CD8-positive, alpha-beta memory T cell (primary cell): ENCODE measurements at regions of chr6 and their contacts with region 1.

Region 1: DNA sequence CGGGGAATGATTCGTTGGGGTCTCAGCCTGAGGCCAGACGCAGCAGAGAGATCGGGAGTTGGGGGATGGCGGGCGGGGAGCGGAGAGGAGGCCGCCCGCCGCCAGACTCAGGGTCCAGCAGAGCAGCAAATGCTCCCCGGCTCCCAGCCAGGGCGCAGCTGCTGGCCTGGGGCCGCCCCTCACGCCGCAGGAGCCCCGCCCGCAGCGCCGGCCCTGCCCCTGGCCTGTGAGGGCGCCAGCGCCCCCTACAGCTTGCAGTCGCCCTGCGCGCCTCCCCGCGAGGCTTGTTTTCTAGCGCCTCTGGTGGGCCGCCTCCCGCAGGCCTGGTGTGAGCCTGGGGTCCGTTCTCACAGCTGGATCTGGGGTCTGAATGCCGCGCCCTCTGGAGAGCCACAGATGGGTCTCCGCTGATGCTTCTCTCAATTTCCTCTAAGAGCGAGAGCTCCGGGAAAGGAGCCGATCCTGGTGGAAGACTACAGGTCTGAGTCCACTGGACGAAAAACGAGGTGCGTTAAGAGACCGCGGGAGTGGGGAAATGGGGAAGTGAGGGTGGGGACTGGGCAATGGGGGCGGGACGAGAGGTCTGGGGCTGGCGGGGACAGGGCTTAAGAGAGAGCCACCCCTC is 29.9 kb downstream of the TRIM38 start:
- DNase-seq: peak; percentile 87 to 93 (median 90)
- H3K4me3 ChIP-seq: peak overlapping the region; percentile 98
- H3K4me3 Mint-ChIP-seq: peak overlapping the region; percentile 84 to 95 (median 94)
- H3K27ac ChIP-seq: peak overlapping the region; percentile 81
- H3K27ac Mint-ChIP-seq: peak overlapping the region; percentile 83 to 98 (median 94)
- H3K4me1 ChIP-seq: no peaks in the 10 kb centered on the region
- H3K4me1 Mint-ChIP-seq: peaks cover 18 to 39% (median 22%) of the 10 kb centered on the region in 3 donors
- H3K27me3 ChIP-seq: no peaks in the 10 kb centered on the region
- H3K27me3 Mint-ChIP-seq: peaks cover 0 to 4% of the 10 kb centered on the region in 2 donors

Region 2: GRCh38 chr6:25042036-25042521 is 950.4 kb before region 1 on chr6:
- CTCF ChIA-PET with region 1: no interaction called
- POLR2A ChIA-PET with region 1: no interaction called
- DNase-seq: peak; percentile 38 to 68 (median 52)
- H3K4me3 ChIP-seq: peak overlapping the region; percentile 85
- H3K4me3 Mint-ChIP-seq: peak overlapping the region; percentile 94 to 99 (median 96)
- H3K27ac ChIP-seq: peak overlapping the region; percentile 67
- H3K27ac Mint-ChIP-seq: peak overlapping the region; percentile 93 to 100 (median 98)
- H3K4me1 ChIP-seq: peaks cover 55% of the 10 kb centered on the region
- H3K4me1 Mint-ChIP-seq: peaks cover 57 to 66% (median 64%) of the 10 kb centered on the region in 3 donors
- H3K27me3 ChIP-seq: no peaks in the 10 kb centered on the region
- H3K27me3 Mint-ChIP-seq: no peaks in the 10 kb centered on the region

Region 3: GRCh38 chr6:25973923-25974555 is 18.5 kb before region 1 on chr6:
- CTCF ChIA-PET with region 1: interaction called, 14 read pairs
- POLR2A ChIA-PET with region 1: interaction called, 5 read pairs
- DNase-seq: no peak
- H3K4me3 ChIP-seq: no peak overlapping the region
- H3K4me3 Mint-ChIP-seq: no peak overlapping the region
- H3K27ac ChIP-seq: no peak overlapping the region
- H3K27ac Mint-ChIP-seq: peak overlapping the region in 3 of 8 donors; percentile 50 to 72 (median 60)
- H3K4me1 ChIP-seq: peaks cover 11% of the 10 kb centered on the region
- H3K4me1 Mint-ChIP-seq: peaks cover 30 to 67% (median 54%) of the 10 kb centered on the region in 3 donors
- H3K27me3 ChIP-seq: no peaks in the 10 kb centered on the region
- H3K27me3 Mint-ChIP-seq: no peaks in the 10 kb centered on the region

Region 4: DNA sequence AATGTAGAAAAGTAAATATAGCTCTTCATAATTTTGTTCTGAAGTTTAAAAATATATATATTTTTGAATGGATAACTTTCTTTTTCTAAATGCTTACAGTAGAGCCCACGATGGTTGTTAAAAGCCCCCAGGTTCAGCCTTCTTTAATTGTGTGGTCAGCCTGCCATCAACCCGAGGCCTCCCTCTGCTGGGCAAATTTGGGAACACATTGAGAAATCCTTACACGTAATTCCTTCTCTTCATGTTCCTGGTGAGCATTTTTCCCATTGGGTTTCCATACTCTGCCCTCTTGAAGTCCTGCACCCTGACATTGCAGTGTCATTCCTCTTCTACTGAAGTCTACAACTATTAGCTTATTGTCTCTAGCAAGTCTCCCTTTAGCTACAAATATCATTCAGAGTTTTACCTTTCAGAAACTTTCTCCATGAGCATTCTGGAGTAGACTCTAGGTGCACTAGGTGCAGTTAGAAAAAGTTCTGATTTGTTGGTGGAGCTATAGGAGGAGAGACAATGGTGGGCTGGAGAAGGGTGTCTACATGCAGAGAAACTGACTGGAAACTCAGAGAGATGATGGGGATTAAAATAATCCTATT is 10.7 kb after region 1 on chr6:
- CTCF ChIA-PET with region 1: interaction called, 100 read pairs
- POLR2A ChIA-PET with region 1: interaction called, 4 read pairs
- DNase-seq: peak; percentile 17 to 65 (median 28)
- H3K4me3 ChIP-seq: no peak overlapping the region
- H3K4me3 Mint-ChIP-seq: no peak overlapping the region
- H3K27ac ChIP-seq: no peak overlapping the region
- H3K27ac Mint-ChIP-seq: no peak overlapping the region
- H3K4me1 ChIP-seq: no peaks in the 10 kb centered on the region
- H3K4me1 Mint-ChIP-seq: peaks cover 0 to 8% (median 0%) of the 10 kb centered on the region in 3 donors
- H3K27me3 ChIP-seq: no peaks in the 10 kb centered on the region
- H3K27me3 Mint-ChIP-seq: no peaks in the 10 kb centered on the region

Region 5: GRCh38 chr6:26020329-26021000 is 27.9 kb after region 1 on chr6:
- CTCF ChIA-PET with region 1: interaction called, 88 read pairs
- POLR2A ChIA-PET with region 1: interaction called, 53 read pairs
- DNase-seq: peak; percentile 68 to 92 (median 88)
- H3K4me3 ChIP-seq: peak overlapping the region; percentile 93
- H3K4me3 Mint-ChIP-seq: peak overlapping the region; percentile 81 to 99 (median 95)
- H3K27ac ChIP-seq: peak overlapping the region; percentile 98
- H3K27ac Mint-ChIP-seq: peak overlapping the region; percentile 93 to 100 (median 100)
- H3K4me1 ChIP-seq: peaks cover 14% of the 10 kb centered on the region
- H3K4me1 Mint-ChIP-seq: peaks cover 30 to 57% (median 44%) of the 10 kb centered on the region in 3 donors
- H3K27me3 ChIP-seq: no peaks in the 10 kb centered on the region
- H3K27me3 Mint-ChIP-seq: peaks cover 0 to 12% of the 10 kb centered on the region in 2 donors

Region 6: GRCh38 chr6:26031595-26032339 is 39.2 kb after region 1 on chr6:
- CTCF ChIA-PET with region 1: interaction called, 30 read pairs
- POLR2A ChIA-PET with region 1: interaction called, 9 read pairs
- DNase-seq: peak; percentile 75 to 91 (median 86)
- H3K4me3 ChIP-seq: peak overlapping the region; percentile 70
- H3K4me3 Mint-ChIP-seq: peak overlapping the region; percentile 89 to 97 (median 95)
- H3K27ac ChIP-seq: peak overlapping the region; percentile 85
- H3K27ac Mint-ChIP-seq: peak overlapping the region; percentile 96 to 99 (median 98)
- H3K4me1 ChIP-seq: peaks cover 30% of the 10 kb centered on the region
- H3K4me1 Mint-ChIP-seq: peaks cover 47 to 69% (median 53%) of the 10 kb centered on the region in 3 donors
- H3K27me3 ChIP-seq: no peaks in the 10 kb centered on the region
- H3K27me3 Mint-ChIP-seq: peaks cover 0 to 6% of the 10 kb centered on the region in 2 donors

Region 7: GRCh38 chr6:26103770-26104456 is 111.4 kb after region 1 on chr6:
- CTCF ChIA-PET with region 1: no interaction called
- POLR2A ChIA-PET with region 1: no interaction called
- DNase-seq: peak; percentile 75 to 96 (median 93)
- H3K4me3 ChIP-seq: peak overlapping the region; percentile 51
- H3K4me3 Mint-ChIP-seq: peak overlapping the region; percentile 83 to 92 (median 87)
- H3K27ac ChIP-seq: peak overlapping the region; percentile 82
- H3K27ac Mint-ChIP-seq: peak overlapping the region; percentile 96 to 98 (median 97)
- H3K4me1 ChIP-seq: peaks cover 18% of the 10 kb centered on the region
- H3K4me1 Mint-ChIP-seq: peaks cover 16 to 20% (median 17%) of the 10 kb centered on the region in 3 donors
- H3K27me3 ChIP-seq: no peaks in the 10 kb centered on the region
- H3K27me3 Mint-ChIP-seq: peaks cover 0 to 4% of the 10 kb centered on the region in 2 donors